Activated naive CD4-positive, alpha-beta T cell treated with anti-CD3 and anti-CD28 coated beads for 36 hours (primary cell): ENCODE measurements at regions of chr1 and their contacts with region 1.

Region 1: DNA sequence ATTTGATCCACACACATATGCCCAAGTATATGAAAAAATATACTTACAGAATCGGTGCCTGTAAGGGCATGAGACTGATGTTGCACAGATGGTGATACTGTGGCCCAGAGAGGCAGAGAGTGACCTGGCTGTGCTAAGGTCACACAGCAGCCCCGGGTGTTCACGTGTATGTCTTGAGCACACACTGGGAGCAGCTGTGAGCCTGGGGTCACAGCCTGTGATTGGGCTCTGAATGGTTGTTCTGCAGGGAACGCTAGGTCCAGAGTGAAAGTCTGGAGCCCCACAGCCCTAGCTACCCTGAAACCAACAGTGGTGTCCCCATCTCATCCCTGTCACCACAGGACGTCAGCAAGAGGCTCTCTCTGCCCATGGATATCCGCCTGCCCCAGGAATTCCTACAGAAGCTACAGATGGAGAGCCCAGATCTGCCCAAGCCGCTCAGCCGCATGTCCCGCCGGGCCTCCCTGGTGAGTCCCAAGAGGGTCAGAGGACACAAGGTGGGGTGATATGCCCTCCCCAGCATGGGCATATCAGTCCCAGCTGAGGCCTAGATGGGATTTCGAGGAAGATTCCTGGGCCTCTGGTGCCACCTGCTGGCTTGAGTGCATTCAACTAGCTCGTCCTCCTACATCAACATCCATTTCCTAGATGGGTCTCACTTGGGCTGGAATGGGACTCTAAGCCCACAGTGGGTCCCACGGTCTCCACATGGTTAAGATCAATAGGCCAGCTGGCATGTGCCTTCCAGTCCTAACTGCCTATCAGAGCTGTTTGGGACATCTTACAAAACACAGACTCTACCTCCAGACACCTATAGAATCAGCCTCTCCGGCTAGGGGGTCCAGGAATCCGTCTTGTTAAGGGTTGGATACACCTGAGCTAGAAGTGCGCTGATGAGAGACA is 19.7 kb downstream of the CDK18 start:
- DNase-seq: peak; percentile 88
- H3K4me3 Mint-ChIP-seq: no peak overlapping the region
- H3K27ac Mint-ChIP-seq: no peak overlapping the region
- H3K4me1 Mint-ChIP-seq: no peaks in the 10 kb centered on the region
- H3K27me3 Mint-ChIP-seq: no peaks in the 10 kb centered on the region

Region 2: DNA sequence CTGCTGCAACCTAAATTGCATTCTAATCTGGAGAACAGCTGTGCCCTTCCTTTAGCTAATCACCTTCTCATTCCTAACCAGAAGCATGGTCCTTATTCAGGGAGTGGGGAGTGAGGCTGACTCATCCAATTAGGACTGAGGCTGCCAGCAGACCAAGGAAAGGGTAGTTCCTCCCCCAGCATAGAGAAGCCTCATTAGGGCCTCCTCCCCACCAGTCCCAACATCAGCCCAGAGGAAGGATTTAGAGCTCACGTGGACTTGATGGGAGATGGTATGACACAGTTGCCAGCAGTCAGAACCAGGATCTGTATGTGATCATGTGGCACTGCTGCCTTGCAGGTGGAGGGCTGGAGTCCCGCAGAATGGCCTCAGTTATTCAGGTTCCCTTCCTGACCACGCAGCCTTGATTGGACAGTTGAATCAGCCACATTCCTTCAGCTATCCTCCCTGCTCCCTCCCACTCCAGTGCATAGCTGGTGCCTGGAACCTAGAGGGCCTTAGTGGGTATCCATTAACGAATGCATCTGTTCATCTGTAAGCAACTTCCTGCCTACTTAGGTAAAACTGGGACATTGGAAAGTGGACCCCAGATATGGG is 175.2 kb before region 1 on chr1:
- CTCF ChIA-PET with region 1: interaction called, 69 read pairs
- intact Hi-C with region 1: loop called (anchors 1 kb)
- DNase-seq: no peak
- H3K4me3 Mint-ChIP-seq: no peak overlapping the region
- H3K27ac Mint-ChIP-seq: no peak overlapping the region
- H3K4me1 Mint-ChIP-seq: peaks cover 5% of the 10 kb centered on the region
- H3K27me3 Mint-ChIP-seq: peaks cover 24% of the 10 kb centered on the region

Region 3: GRCh38 chr1:205396967-205397616 is 127.0 kb before region 1 on chr1:
- CTCF ChIA-PET with region 1: interaction called, 42 read pairs
- intact Hi-C with region 1: loop called (anchors 1 kb)
- DNase-seq: peak; percentile 43
- H3K4me3 Mint-ChIP-seq: no peak overlapping the region
- H3K27ac Mint-ChIP-seq: no peak overlapping the region
- H3K4me1 Mint-ChIP-seq: no peaks in the 10 kb centered on the region
- H3K27me3 Mint-ChIP-seq: peaks cover 10% of the 10 kb centered on the region

Region 4: DNA sequence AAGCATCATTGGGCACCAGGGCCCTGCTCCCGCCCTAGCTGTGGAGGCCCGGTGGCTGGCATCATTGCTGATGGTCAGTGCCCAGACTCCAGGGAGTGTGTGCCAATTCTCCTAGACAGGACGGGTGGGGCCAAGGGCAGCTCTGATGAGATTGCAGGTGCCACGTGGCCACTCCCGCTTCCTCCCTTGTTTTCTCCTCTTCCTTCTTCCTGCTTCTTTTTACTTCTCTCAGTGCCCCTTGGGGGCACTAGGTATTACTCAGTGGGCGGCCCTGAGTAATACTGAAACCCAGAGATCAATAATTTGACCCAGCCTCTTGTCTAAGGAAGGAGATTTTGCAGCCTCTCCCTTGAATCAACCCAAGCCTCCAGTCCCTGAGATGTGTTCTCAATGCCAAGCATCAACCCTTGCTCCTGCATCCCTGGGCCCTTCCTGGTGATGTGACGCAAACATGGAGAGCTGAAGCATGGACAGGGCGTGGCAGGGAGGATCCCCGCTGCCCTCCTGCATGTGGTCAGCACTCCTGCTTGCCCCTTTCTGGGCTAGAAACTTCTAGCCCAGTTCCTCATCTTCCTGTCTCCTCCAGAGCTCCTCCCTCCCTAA is 12.7 kb after region 1 on chr1:
- CTCF ChIA-PET with region 1: interaction called, 40 read pairs
- intact Hi-C with region 1: no loop called
- DNase-seq: no peak
- H3K4me3 Mint-ChIP-seq: no peak overlapping the region
- H3K27ac Mint-ChIP-seq: no peak overlapping the region
- H3K4me1 Mint-ChIP-seq: peaks cover 3% of the 10 kb centered on the region
- H3K27me3 Mint-ChIP-seq: peaks cover 9% of the 10 kb centered on the region

Region 5: GRCh38 chr1:205568469-205569361 is 44.6 kb after region 1 on chr1:
- CTCF ChIA-PET with region 1: interaction called, 10 read pairs
- intact Hi-C with region 1: no loop called
- DNase-seq: no peak
- H3K4me3 Mint-ChIP-seq: peak overlapping the region; percentile 50
- H3K27ac Mint-ChIP-seq: no peak overlapping the region
- H3K4me1 Mint-ChIP-seq: peaks cover 1% of the 10 kb centered on the region
- H3K27me3 Mint-ChIP-seq: peaks cover 34% of the 10 kb centered on the region

Region 6: GRCh38 chr1:205591522-205592351 is 67.6 kb after region 1 on chr1:
- CTCF ChIA-PET with region 1: interaction called, 26 read pairs
- intact Hi-C with region 1: loop called (anchors 1 kb)
- DNase-seq: peak; percentile 96
- H3K4me3 Mint-ChIP-seq: peak overlapping the region; percentile 88
- H3K27ac Mint-ChIP-seq: peak overlapping the region; percentile 90
- H3K4me1 Mint-ChIP-seq: peaks cover 48% of the 10 kb centered on the region
- H3K27me3 Mint-ChIP-seq: no peaks in the 10 kb centered on the region